ENCODE measurements at regions of chr5 and their contacts with region 1.

Region 1: DNA sequence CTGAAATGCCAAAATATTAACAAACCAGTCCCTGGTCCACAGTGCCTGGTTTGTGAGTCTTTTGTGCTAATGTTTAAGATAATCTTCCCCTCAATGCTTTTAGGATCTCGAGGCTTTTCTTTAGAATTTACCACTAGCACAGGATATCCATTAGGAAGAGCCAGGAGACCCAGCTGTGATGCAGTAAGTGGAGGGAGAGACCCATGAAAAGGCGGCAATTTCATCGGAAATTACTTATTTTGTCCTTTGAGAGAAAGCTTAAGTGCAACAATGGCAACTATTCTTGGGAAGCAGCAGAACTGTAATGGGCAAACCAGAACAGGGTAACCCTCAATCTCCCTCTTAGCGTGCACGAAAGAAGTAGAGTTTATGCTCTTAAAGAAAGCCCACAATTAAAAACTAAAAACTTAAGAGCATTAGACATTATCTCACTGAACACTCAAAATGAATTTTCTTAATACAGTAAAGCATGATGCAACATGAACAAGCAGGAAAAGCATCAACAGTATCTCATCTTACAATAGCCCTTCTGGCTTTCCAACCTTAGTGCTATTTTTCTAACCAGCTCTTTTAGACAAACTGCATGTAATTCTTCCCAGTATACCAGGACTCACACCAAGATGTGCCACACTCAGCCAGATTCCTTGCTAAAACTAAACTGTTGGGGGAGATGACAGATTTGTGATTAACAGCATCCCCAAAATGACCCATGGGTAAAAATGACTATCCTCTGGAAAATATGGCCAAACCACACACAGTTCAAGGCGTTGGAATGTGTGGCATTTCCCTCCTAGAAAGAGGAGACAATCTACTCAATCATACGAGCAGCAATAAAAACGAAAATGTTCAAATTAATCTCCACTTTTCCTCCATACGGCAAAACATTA is 36.4 kb downstream of the PWWP2A start:
- DNase-seq: no peak
- CTCF ChIP-seq: no peak

Region 2: GRCh38 chr5:160064995-160065630 is 17.7 kb before region 1 on chr5:
- CTCF ChIA-PET with region 1: interaction called, 12 read pairs
- POLR2A ChIA-PET with region 1: interaction called, 4 read pairs
- DNase-seq: no peak
- CTCF ChIP-seq: no peak

Region 3: GRCh38 chr5:160071516-160071915 is 11.3 kb before region 1 on chr5:
- CTCF ChIA-PET with region 1: interaction called, 10 read pairs
- POLR2A ChIA-PET with region 1: interaction called, 4 read pairs
- DNase-seq: no peak
- CTCF ChIP-seq: no peak

Region 4: GRCh38 chr5:160092960-160093707 is 10.3 kb after region 1 on chr5:
- CTCF ChIA-PET with region 1: interaction called, 18 read pairs
- POLR2A ChIA-PET with region 1: no interaction called
- DNase-seq: peak; percentile 58
- CTCF ChIP-seq: no peak

Region 5: DNA sequence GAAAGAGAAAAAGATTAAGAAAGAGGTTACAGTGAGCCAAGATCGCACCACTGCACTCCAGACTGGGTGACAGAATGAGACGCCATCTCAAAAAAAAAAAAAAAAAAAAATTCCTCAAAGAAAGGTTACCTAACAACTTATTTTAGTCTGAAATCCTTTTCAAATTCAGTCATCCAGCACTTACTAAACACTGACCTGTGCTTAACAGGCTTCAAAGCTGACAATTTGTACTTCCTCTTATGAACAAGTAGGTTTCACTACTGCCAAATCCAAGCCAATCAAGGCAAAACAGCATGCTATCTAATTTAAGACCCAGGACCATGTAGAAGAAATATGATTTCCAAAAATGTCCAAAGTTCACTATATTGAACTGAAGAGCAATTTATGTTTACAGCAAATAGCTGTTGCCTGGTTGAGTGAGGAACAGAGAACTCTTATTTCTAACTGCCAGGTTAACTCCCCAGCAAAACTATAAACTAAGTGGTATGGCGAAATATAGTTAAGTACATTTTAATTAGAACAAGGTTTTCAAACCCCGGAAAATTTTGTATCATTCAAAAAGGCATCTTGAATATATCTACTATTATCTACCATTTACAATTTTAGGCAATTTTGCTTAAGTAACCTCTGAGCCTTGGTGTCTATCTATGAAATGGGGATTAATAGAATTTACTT is 23.0 kb after region 1 on chr5:
- CTCF ChIA-PET with region 1: interaction called, 11 read pairs
- POLR2A ChIA-PET with region 1: no interaction called
- DNase-seq: peak; percentile 50
- CTCF ChIP-seq: no peak

Region 6: GRCh38 chr5:160119142-160119904 is 36.5 kb after region 1 on chr5 and contains the start of gene PWWP2A:
- CTCF ChIA-PET with region 1: no interaction called
- POLR2A ChIA-PET with region 1: no interaction called
- DNase-seq: peak; percentile 95
- CTCF ChIP-seq: peak; percentile 17

Region 7: DNA sequence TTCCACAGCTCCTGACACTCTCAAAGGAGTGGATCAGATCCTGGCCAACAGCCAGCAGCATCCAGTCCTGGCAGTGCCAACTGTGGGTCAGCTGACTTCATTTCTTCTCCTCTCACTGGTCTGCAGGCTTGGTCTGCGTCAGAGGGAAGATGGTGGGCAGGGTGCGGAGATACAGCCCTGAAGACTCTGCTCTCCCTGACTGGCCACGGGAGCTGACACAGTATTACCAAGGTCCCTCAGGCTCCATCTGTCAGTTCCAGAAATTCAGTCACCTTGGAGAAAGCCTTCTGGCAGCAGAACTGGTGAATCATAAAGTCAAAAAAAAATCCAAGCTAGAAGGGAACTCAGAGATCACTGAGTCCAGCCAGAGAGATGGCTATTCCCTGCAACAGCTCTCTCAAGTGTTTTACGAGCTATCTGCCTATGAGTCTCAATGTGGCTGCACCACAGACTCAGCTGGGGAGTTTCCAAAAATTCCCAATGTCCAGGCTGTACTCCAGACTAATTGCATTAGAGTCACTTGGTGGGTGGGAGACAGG is 259.6 kb after region 1 on chr5:
- CTCF ChIA-PET with region 1: interaction called, 21 read pairs
- POLR2A ChIA-PET with region 1: no interaction called
- DNase-seq: no peak
- CTCF ChIP-seq: no peak

Region 8: DNA sequence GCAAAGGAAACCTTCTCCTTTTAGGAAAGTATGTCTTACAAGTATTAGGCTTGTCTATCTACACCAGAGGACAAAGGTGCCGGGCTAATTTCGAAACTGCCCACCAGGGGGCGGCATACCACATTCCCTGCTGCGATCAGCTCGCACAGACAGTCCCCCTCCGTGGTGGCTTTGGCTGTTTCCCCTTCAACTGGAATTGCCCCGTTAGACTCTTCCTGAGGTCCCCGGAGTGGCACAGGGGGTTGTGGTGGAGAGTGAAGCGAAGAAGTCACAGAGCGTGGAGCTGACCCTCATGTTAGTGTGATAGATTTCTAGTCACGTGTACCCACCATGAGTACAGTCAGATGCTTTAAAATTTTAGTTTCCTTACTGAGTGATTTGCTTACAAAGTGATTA is 356.3 kb after region 1 on chr5:
- CTCF ChIA-PET with region 1: no interaction called
- POLR2A ChIA-PET with region 1: no interaction called
- DNase-seq: peak; percentile 63
- CTCF ChIP-seq: peak; percentile 78